ENCODE measurements at regions of chr10 and their contacts with region 1.

Region 1: DNA sequence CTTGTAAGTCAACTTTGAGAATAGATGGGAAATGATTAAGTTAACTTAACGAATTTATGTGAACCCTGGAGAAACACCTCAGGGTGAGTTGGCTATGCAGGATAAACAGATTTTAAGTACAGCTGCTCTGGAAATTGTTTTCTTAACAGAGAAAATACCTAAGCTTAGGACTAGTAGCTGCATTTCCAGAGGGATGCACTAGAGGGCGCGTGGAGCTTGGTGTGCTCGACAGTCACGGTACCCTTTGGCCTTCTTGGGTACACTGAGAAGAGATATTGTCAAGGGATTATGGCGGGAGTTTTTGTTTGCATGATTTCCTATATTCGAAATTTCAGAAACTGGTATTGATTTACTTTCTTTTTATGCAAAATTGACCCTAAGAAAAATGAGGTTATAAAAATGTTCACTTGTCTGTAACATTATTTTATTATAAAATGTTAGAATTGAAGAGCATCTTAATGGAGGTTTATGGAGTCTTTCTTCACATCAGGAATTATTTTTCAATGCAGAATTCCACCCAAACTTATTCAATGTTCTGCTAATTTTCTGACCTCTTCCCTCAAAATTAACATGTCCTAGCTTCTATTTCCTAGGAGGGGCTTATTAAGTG is 58.4 kb upstream of the MYO3A start:
- DNase-seq: peak; percentile 29
- H3K4me3 ChIP-seq: no peak overlapping the region
- H3K27ac ChIP-seq: no peak overlapping the region
- H3K4me1 ChIP-seq: no peaks in the 10 kb centered on the region
- H3K27me3 ChIP-seq: no peaks in the 10 kb centered on the region
- CTCF ChIP-seq: peak; percentile 33 to 60 (median 50)
- POLR2A ChIP-seq: no peak

Region 2: GRCh38 chr10:25820874-25821273 is 54.8 kb before region 1 on chr10:
- intact Hi-C with region 1: no loop called
- DNase-seq: no peak
- H3K4me3 ChIP-seq: no peak overlapping the region
- H3K27ac ChIP-seq: no peak overlapping the region
- H3K4me1 ChIP-seq: no peaks in the 10 kb centered on the region
- H3K27me3 ChIP-seq: no peaks in the 10 kb centered on the region
- CTCF ChIP-seq: no peak
- POLR2A ChIP-seq: no peak

Region 3: GRCh38 chr10:26214551-26215395 is 339.1 kb after region 1 on chr10:
- intact Hi-C with region 1: no loop called
- DNase-seq: no peak
- H3K4me3 ChIP-seq: no peak overlapping the region
- H3K27ac ChIP-seq: no peak overlapping the region
- H3K4me1 ChIP-seq: peaks cover 6% of the 10 kb centered on the region
- H3K27me3 ChIP-seq: peaks cover 53% of the 10 kb centered on the region
- CTCF ChIP-seq: no peak
- POLR2A ChIP-seq: no peak

Region 4: GRCh38 chr10:26556748-26557640 is 681.3 kb after region 1 on chr10:
- intact Hi-C with region 1: loop called (anchors 10 kb)
- DNase-seq: no peak
- H3K4me3 ChIP-seq: no peak overlapping the region
- H3K27ac ChIP-seq: no peak overlapping the region
- H3K4me1 ChIP-seq: no peaks in the 10 kb centered on the region
- H3K27me3 ChIP-seq: no peaks in the 10 kb centered on the region
- CTCF ChIP-seq: peak; percentile 18 to 60 (median 43)
- POLR2A ChIP-seq: no peak

Measured in prostate gland (tissue), 2 donors.